ENCODE measurements at regions of chr1 and their contacts with region 1.

Region 1: DNA sequence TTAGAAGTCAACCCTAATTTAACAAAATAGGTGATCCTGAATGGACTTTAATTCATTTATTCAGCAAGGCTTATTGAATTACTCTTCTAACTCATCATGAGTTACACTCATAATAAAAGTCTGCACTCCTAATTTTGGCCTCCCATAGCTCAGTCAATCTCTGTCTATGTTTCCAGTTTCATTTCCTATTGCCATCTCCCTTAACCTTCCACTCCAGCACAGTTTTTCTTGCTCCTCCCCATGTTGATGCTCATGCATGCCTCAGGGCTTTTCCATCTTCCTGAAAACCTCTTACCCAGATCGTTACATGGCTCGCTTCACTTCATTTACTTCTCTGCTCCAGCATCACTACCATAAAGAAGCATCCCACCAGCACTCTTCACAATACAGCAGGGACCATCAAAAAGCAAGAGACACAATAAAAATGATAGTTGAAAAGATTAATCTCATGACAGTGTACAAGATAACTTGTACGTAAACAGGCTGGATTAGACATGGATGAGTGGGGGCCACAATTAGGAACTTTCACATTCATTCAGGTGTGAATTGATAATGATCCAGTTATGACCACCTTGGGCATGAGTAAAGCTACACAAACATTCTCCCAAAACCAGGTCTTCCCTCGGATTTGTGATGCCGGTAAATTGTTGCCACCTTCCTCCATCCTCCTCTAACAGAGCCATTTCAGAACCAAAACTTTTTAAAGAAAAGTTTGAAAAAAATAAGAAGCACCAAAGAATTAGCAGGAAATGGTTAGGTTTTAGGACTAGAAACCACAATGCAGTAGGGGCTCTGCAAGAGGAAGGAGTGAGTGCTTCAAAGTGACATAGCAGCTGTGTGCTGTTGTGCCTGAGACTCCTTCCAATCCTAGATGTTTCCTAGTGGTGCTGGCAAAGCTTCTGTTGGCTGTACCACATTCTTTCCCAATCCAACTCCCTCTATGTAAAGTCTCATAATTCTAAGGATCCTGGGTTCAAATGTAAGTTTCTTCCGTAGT is 89.8 kb downstream of the OLFML2B start:
- DNase-seq: no peak
- ATAC-seq: peak; percentile 81
- H3K4me3 Mint-ChIP-seq: peak overlapping the region; percentile 2
- H3K27ac Mint-ChIP-seq: peak overlapping the region; percentile 84
- H3K4me1 Mint-ChIP-seq: peaks cover 52% of the 10 kb centered on the region
- H3K27me3 Mint-ChIP-seq: no peaks in the 10 kb centered on the region

Region 2: DNA sequence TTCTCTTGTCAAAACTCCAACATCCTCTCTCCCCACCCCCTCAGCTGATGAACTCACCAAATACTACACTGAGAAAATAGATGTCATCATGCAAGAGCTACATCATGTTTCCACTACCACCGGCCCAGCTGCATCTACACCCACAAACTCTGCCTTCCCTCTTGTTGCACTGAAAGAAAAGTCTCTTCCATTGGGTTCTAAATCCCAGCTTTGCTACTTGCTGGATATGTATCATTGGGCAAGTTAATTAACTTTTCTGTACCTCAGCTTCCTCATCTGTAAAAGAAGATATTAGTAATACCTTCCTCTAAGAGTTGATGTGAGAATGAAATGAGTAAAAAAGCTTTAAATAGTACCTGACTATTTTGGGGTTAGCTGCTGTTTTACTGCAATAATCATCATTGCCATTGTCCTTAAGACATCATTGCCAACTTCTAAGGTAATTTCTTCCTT is 18.8 kb before region 1 on chr1:
- CTCF ChIA-PET with region 1: interaction called, 6 read pairs
- POLR2A ChIA-PET with region 1: no interaction called
- intact Hi-C with region 1: loop called in 1 of 2 experiments (anchors 1 kb)
- DNase-seq: peak; percentile 73
- ATAC-seq: peak; percentile 82
- H3K4me3 Mint-ChIP-seq: no peak overlapping the region
- H3K27ac Mint-ChIP-seq: no peak overlapping the region
- H3K4me1 Mint-ChIP-seq: peaks cover 34% of the 10 kb centered on the region
- H3K27me3 Mint-ChIP-seq: no peaks in the 10 kb centered on the region

Region 3: GRCh38 chr1:162046921-162047320 is 113.0 kb after region 1 on chr1:
- CTCF ChIA-PET with region 1: no interaction called
- POLR2A ChIA-PET with region 1: no interaction called
- intact Hi-C with region 1: no loop called
- DNase-seq: no peak
- ATAC-seq: no peak
- H3K4me3 Mint-ChIP-seq: no peak overlapping the region
- H3K27ac Mint-ChIP-seq: no peak overlapping the region
- H3K4me1 Mint-ChIP-seq: no peaks in the 10 kb centered on the region
- H3K27me3 Mint-ChIP-seq: peaks cover 2% of the 10 kb centered on the region

Measured in activated CD4-positive, alpha-beta T cell treated with anti-CD3 and anti-CD28 coated beads for 36 hours (primary cell).